ENCODE measurements at regions of chr12 and their contacts with region 1.

Region 1: DNA sequence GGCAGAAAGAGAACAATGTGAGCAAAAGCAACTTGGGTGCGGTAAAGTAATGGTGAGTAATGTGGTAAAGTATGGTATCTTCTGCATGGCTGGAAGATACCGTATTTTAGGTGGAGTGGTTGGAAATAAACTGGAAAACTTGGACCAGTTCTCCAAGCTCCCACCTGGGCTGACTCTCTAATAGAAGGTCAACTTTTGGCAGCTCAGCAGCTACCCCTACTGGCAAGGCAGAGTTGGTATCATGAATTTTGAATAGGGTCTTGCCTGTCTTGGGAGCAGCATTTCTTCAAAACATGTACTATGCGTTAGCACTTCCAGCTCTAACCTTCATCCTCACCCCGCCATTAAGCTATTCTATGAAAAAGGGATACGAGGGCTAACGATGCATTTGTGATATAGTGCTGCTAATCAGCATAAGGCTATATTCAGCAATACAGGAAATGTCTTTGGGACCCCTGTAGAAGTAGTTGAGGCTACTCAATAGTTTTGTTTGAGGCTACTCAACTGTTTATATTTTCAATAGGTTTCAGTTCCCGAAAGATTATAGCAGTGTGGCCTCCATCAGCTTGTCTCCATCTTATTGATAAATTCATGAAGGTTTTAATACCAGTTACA is 276.3 kb upstream of the FAR2 start:
- DNase-seq: peak; percentile 79
- H3K4me3 Mint-ChIP-seq: no peak overlapping the region
- H3K27ac Mint-ChIP-seq: no peak overlapping the region
- H3K4me1 Mint-ChIP-seq: peaks cover 11% of the 10 kb centered on the region
- H3K27me3 Mint-ChIP-seq: peaks cover 8% of the 10 kb centered on the region
- CTCF ChIP-seq: peak; percentile 75

Region 2: GRCh38 chr12:27840244-27840999 is 1032.3 kb before region 1 on chr12:
- CTCF ChIA-PET with region 1: no interaction called
- intact Hi-C with region 1: loop called (anchors 5 kb)
- DNase-seq: no peak
- H3K4me3 Mint-ChIP-seq: no peak overlapping the region
- H3K27ac Mint-ChIP-seq: no peak overlapping the region
- H3K4me1 Mint-ChIP-seq: peaks cover 14% of the 10 kb centered on the region
- H3K27me3 Mint-ChIP-seq: no peaks in the 10 kb centered on the region
- CTCF ChIP-seq: no peak

Region 3: DNA sequence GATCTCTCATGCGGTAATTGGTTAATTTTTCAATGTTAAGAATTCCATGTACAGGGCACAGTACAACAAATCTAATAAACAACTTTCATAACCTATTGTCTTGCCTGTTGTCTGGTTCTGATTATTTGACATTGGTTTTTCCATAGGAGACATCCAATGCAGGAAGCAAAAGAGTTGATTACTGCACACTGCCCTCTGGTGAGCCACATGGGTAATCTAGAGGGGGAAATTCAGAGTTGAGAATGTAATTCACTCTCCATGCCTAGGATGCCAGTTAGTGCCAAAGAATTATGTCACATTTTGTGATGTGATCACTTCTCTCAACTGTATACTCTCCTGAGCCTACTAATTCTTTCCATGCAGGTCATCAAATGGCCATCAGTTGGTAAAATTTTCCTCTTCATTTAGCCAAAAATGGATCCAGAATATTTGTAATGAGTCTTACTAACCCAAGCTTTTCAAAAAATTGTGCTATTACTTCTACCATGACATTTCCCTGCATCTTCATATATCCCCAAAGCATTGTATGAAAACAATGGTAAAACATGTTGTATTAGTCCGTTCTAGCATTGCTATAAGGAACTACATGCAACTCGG is 700.2 kb before region 1 on chr12:
- CTCF ChIA-PET with region 1: no interaction called
- intact Hi-C with region 1: loop called (anchors 5 kb)
- DNase-seq: peak; percentile 43
- H3K4me3 Mint-ChIP-seq: no peak overlapping the region
- H3K27ac Mint-ChIP-seq: no peak overlapping the region
- H3K4me1 Mint-ChIP-seq: no peaks in the 10 kb centered on the region
- H3K27me3 Mint-ChIP-seq: no peaks in the 10 kb centered on the region
- CTCF ChIP-seq: peak; percentile 31

Region 4: GRCh38 chr12:28237423-28237822 is 635.3 kb before region 1 on chr12:
- CTCF ChIA-PET with region 1: no interaction called
- intact Hi-C with region 1: loop called (anchors 2 kb)
- DNase-seq: peak; percentile 5
- H3K4me3 Mint-ChIP-seq: no peak overlapping the region
- H3K27ac Mint-ChIP-seq: no peak overlapping the region
- H3K4me1 Mint-ChIP-seq: no peaks in the 10 kb centered on the region
- H3K27me3 Mint-ChIP-seq: no peaks in the 10 kb centered on the region
- CTCF ChIP-seq: no peak

Region 5: GRCh38 chr12:28294300-28294699 is 578.5 kb before region 1 on chr12:
- CTCF ChIA-PET with region 1: no interaction called
- intact Hi-C with region 1: no loop called
- DNase-seq: no peak
- H3K4me3 Mint-ChIP-seq: no peak overlapping the region
- H3K27ac Mint-ChIP-seq: no peak overlapping the region
- H3K4me1 Mint-ChIP-seq: no peaks in the 10 kb centered on the region
- H3K27me3 Mint-ChIP-seq: no peaks in the 10 kb centered on the region
- CTCF ChIP-seq: no peak

Region 6: GRCh38 chr12:28569698-28570411 is 302.9 kb before region 1 on chr12:
- CTCF ChIA-PET with region 1: no interaction called
- intact Hi-C with region 1: loop called (anchors 2 kb)
- DNase-seq: peak; percentile 30
- H3K4me3 Mint-ChIP-seq: no peak overlapping the region
- H3K27ac Mint-ChIP-seq: peak overlapping the region; percentile 52
- H3K4me1 Mint-ChIP-seq: peaks cover 43% of the 10 kb centered on the region
- H3K27me3 Mint-ChIP-seq: no peaks in the 10 kb centered on the region
- CTCF ChIP-seq: no peak

Region 7: DNA sequence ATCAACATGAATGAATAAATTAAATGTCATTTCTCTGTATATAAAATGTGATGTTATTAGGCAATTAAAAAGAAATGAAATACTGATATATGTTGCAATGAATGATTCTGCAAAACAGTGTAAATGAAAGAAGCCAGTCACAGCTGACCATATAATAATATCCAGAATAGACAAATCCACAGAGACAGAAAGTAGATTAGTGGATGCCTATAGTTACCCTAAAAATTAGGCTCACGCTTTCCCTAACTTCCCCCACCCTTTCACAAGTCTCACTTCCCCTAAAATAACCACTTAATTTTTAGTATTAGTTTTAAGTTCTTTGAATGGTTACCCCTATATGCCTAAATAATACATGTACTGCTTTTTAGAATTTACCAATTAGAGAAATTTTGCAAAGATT is 72.6 kb before region 1 on chr12:
- CTCF ChIA-PET with region 1: no interaction called
- intact Hi-C with region 1: loop called (anchors 10 kb)
- DNase-seq: no peak
- H3K4me3 Mint-ChIP-seq: no peak overlapping the region
- H3K27ac Mint-ChIP-seq: no peak overlapping the region
- H3K4me1 Mint-ChIP-seq: peaks cover 15% of the 10 kb centered on the region
- H3K27me3 Mint-ChIP-seq: no peaks in the 10 kb centered on the region
- CTCF ChIP-seq: no peak